ENCODE measurements at regions of chr1 and their contacts with region 1.

Region 1: GRCh38 chr1:92291372-92291999 is 7.3 kb downstream of the GLMN start:
- DNase-seq: peak in 1 of 2 experiments; percentile 34
- H3K4me3 ChIP-seq: no peak overlapping the region
- H3K4me3 Mint-ChIP-seq: no peak overlapping the region
- H3K27ac Mint-ChIP-seq: no peak overlapping the region
- H3K4me1 ChIP-seq: 0 out of 2 replicates have a peak, but pooled peaks cover 5% of the 10 kb centered on the region
- H3K4me1 Mint-ChIP-seq: no peaks in the 10 kb centered on the region
- H3K27me3 ChIP-seq: no peaks in the 10 kb centered on the region
- H3K27me3 Mint-ChIP-seq: no peaks in the 10 kb centered on the region
- CTCF ChIP-seq: peak; percentile 25 to 58

Region 2: GRCh38 chr1:91997607-91998195 is 293.8 kb before region 1 on chr1:
- CTCF ChIA-PET with region 1: interaction called, 14 read pairs
- POLR2A ChIA-PET with region 1: no interaction called
- intact Hi-C with region 1: loop called (anchors 1 kb)
- DNase-seq: peak in 1 of 2 experiments; percentile 16
- H3K4me3 ChIP-seq: no peak overlapping the region
- H3K4me3 Mint-ChIP-seq: no peak overlapping the region
- H3K27ac Mint-ChIP-seq: no peak overlapping the region
- H3K4me1 ChIP-seq: no peaks in the 10 kb centered on the region
- H3K4me1 Mint-ChIP-seq: no peaks in the 10 kb centered on the region
- H3K27me3 ChIP-seq: no peaks in the 10 kb centered on the region
- H3K27me3 Mint-ChIP-seq: no peaks in the 10 kb centered on the region
- CTCF ChIP-seq: peak; percentile 32 to 38

Region 3: DNA sequence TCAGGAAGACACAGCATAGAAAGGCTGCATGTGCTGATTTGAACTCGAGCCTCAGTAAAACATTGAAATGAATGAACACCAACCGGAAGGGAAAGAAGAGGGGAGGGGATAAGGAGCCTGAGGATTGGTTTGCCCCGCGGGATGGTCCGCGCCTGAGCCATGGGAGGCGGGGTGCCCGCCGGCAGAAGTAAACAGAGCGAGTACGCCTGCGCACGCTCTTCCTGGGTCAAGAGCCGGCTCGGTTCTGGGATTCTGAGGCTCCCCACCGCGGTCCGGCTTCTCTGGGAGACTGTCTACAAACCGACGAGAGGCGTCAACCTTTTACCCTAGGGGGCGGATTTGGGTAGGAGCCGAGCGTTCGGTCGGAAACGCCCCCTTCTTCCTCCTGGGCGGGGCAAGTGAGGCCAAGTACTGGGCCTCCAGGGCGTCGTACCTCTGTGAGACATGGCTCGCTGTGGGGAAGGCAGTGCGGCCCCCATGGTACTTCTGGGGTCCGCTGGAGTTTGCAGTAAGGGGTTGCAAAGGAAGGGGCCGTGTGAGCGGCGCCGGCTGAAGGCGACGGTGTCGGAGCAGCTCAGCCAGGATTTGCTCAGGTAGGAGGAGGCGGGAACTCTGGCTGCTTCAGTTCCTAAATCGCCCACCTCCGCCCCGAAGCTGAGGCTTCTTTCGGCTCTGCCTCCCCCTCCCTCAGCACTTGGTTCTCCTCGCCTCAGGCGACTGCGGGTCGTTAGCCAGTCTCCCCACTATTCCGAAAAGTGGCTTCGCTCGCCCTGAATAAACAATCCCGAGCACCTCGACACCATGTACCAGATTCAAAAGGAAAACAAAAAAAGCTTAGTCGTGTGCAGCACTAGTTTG is 211.1 kb before region 1 on chr1 and contains the start of gene BTBD8:
- CTCF ChIA-PET with region 1: no interaction called
- POLR2A ChIA-PET with region 1: no interaction called
- intact Hi-C with region 1: loop called (anchors 2 kb)
- DNase-seq: peak; percentile 83 to 85
- H3K4me3 ChIP-seq: peak within 1 kb of the TSS; percentile 50
- H3K4me3 Mint-ChIP-seq: peak within 1 kb of the TSS; percentile 81
- H3K27ac Mint-ChIP-seq: peak within 1 kb of the TSS; percentile 90
- H3K4me1 ChIP-seq: no peaks in the 10 kb centered on the region
- H3K4me1 Mint-ChIP-seq: no peaks in the 10 kb centered on the region
- H3K27me3 ChIP-seq: no peaks in the 10 kb centered on the region
- H3K27me3 Mint-ChIP-seq: no peaks in the 10 kb centered on the region
- CTCF ChIP-seq: no peak
- total RNA-seq, gene BTBD8: 1.1 and 1.3 TPM in 2 replicates

Measured in Caco-2 (cell line).